ENCODE measurements at regions of chr20 and their contacts with region 1.

Region 1: GRCh38 chr20:50958615-50959542 is at the start of gene MOCS3:
- DNase-seq: peak; percentile 74 to 87
- H3K4me3 ChIP-seq: peak within 1 kb of the TSS; percentile 83 to 88
- H3K27ac ChIP-seq: peak within 1 kb of the TSS; percentile 87 to 88
- H3K4me1 ChIP-seq: peaks cover 0 to 50% (median 33%) of the 10 kb centered on the region in 4 donors
- H3K27me3 ChIP-seq: no peaks in the 10 kb centered on the region
- CTCF ChIP-seq: peak; percentile 8 to 11

Region 2: DNA sequence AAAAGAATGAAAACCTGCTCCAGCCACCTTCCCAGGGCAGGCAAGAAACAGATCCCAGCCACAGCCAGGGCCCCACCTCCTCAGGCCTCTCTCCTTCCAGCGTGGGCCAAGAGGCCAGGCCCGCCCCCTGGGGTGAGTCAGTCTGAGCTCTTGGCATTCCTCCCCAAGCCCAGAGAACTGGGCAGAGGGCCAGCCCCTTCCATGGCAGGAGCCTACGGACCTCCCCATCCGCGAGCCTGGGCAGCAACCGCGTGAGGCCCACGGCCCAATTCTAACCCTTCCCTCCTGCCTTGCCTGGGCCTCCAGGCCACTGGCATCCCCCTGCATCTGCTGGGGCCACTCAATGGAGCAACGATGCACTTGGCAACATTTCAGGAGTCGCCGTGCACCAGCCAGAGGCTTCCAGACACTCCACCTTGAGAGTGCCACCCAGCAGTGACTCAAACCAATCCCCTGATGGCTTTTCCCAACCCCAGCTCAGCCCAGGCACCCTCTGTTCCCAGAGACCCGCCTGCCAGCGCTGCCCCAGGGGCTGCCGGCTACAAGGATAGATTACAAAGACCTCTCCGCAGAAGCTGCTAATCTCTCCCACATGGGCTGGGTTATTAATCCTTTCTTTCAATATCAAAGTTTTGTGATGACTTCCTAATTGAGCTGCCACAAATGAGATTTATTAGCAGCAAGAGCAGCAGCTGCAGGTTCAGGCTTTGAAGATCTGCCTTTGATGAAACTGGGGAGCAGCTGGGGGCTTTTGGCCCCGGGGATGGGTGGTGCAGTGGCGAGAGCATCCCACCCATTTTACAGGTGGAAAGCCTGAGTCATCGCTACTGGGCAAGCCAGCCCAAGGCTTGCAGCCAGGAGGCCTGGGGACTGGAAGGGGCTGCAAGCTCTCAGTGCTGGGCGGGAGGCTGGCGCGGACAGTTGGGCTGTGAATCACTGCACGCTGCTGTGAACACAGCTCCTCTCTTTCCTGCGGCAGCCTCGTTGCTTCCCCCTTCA is 497.9 kb after region 1 on chr20:
- intact Hi-C with region 1: loop called (anchors 10 kb)
- DNase-seq: peak; percentile 98 to 99
- H3K4me3 ChIP-seq: peak overlapping the region; percentile 24 to 30
- H3K27ac ChIP-seq: peak overlapping the region; percentile 69 to 75
- H3K4me1 ChIP-seq: peaks cover 0 to 28% (median 17%) of the 10 kb centered on the region in 4 donors
- H3K27me3 ChIP-seq: no peaks in the 10 kb centered on the region
- CTCF ChIP-seq: no peak

Measured in tibial artery (tissue), 4 donors.